HCT116 (cell line): ENCODE measurements at regions of chr6 and their contacts with region 1.

Region 1: DNA sequence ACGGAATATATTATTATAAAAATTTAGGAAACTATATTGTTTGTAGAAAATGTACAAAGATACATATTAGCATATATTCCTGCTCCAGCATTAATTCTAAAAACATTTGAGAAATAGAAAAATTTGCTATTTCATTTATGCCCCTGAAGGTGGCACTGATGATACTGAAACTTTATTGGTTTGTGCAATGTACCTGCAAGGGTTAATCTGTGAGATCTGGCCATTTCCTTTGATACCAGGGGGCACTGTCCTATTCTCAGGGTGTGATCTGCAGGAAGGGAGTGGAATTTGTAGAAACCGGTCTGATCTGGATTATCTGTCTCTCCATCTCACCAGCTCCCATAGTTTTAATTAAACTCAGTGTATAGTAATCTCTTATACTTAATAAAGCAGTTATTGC is 625.1 kb upstream of the IMPG1 start:
- DNase-seq: peak; percentile 61
- ATAC-seq: peak; percentile 75
- H3K4me3 ChIP-seq: no peak overlapping the region
- H3K27ac ChIP-seq: no peak overlapping the region
- H3K4me1 ChIP-seq: peaks cover 5 to 7% of the 10 kb centered on the region in 2 experiments; a peak in 3 of 4 replicates
- H3K27me3 ChIP-seq: no peaks in the 10 kb centered on the region
- CTCF ChIP-seq: peak; percentile 47 to 69 (median 50); a peak in 5 of 6 replicates
- POLR2A ChIP-seq: no peak
- RAD21 ChIP-seq: peak; percentile 62

Region 2: DNA sequence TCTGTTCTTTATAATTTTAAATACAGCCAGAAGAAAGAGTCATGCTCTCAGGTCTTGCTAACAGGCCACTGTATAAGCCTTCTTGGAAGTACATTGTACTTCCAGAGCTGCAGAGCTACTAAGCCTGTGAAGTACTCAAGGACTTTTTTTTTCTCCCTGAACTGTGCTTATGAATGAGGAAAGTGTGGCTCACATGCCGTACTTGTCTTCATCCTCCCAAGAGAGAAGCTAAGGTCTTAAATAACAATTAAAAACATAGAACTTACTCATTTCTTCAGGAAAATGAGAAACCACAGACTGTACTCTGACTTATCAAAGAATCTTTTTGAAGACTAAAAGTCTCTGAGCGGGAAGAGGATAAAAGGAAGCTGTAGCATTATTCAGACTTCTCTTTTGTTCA is 547.4 kb after region 1 on chr6:
- CTCF ChIA-PET with region 1: no interaction called
- POLR2A ChIA-PET with region 1: no interaction called
- RAD21 ChIA-PET with region 1: no interaction called
- intact Hi-C with region 1: no loop called
- DNase-seq: no peak
- ATAC-seq: no peak
- H3K4me3 ChIP-seq: no peak overlapping the region
- H3K27ac ChIP-seq: no peak overlapping the region
- H3K4me1 ChIP-seq: no peaks in the 10 kb centered on the region; a peak in 1 of 4 replicates
- H3K27me3 ChIP-seq: no peaks in the 10 kb centered on the region
- CTCF ChIP-seq: no peak
- POLR2A ChIP-seq: no peak
- RAD21 ChIP-seq: no peak

Region 3: GRCh38 chr6:77457720-77458349 is 760.2 kb after region 1 on chr6:
- CTCF ChIA-PET with region 1: no interaction called
- POLR2A ChIA-PET with region 1: no interaction called
- RAD21 ChIA-PET with region 1: no interaction called
- intact Hi-C with region 1: loop called (anchors 2 kb)
- DNase-seq: peak; percentile 84
- ATAC-seq: peak; percentile 89
- H3K4me3 ChIP-seq: no peak overlapping the region
- H3K27ac ChIP-seq: no peak overlapping the region
- H3K4me1 ChIP-seq: peaks cover 12 to 26% of the 10 kb centered on the region in 2 experiments
- H3K27me3 ChIP-seq: no peaks in the 10 kb centered on the region
- CTCF ChIP-seq: peak; percentile 61 to 71 (median 68); a peak in 5 of 6 replicates
- POLR2A ChIP-seq: no peak
- RAD21 ChIP-seq: peak; percentile 78